Cardiac septum (tissue), 1 donor: ENCODE measurements at regions of chr17 and their contacts with region 1.

Region 1: GRCh38 chr17:69235338-69235930 is 6.8 kb upstream of the ABCA10 start:
- DNase-seq: peak; percentile 84

Region 2: DNA sequence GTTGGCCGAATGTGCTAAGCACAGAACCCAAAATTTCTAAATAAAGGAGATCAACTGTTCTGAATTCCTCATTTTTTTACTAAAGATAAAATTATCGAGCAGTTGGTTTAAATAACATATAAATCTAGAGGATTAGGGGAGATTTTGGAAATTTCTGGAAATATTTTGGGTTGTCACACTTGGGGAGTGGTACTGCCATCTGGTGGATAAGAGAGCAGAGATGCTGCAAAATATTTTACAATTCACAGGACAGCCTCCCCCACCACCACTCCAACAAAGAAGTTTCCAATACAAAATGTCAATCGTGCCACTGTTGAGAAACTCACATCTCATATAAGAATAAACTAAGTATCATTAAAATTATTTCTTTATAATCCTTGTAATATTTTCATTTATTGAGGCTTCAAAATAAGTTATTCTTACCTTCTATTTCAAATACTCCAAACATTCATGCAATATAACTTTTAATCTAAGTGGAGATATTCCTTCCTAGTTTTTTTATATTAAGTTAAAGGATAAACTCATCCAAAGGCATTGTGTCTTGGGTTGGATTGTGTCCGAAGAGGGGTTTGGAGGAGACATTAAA is 263.2 kb before region 1 on chr17:
- intact Hi-C with region 1: loop called (anchors 10 kb)
- DNase-seq: no peak